Endothelial cell of umbilical vein (primary cell): ENCODE measurements at regions of chr15 and their contacts with region 1.

Region 1: DNA sequence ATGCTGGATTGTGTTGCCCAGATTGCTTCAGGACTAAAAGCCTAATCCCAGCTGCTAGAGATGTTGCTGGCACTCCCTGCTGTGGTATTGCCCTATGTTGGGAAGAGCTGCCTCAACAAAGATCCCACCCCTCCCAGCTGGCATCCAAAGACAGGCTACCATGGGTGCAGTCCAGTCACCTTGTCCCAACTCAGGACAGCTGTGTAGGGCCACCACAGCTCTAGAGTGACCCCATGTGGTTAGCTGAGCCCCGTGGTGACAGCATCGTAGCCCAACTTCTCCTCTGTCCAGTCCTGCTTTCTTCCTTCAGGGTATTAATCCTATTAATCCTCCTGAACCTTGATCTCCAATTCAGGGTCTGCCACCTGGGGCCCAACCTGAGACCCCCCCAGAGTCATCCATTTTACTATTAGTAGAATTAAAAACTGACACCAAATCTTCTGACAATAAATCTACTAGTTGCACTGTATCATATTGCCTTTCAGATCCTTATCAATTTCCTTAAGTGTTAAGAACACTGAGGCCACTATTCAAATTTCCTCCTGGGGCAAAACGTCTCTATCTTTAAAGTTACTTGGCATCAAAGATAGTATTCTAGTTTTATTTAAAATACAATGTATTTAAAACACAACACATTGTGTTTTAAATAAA is 83.5 kb downstream of the AQP9 start:
- DNase-seq: peak; percentile 48
- H3K4me3 ChIP-seq: no peak overlapping the region
- H3K27ac ChIP-seq: no peak overlapping the region
- H3K4me1 ChIP-seq: no peaks in the 10 kb centered on the region
- H3K27me3 ChIP-seq: no peaks in the 10 kb centered on the region
- CTCF ChIP-seq: peak; percentile 67 to 72
- POLR2A ChIP-seq: no peak

Region 2: DNA sequence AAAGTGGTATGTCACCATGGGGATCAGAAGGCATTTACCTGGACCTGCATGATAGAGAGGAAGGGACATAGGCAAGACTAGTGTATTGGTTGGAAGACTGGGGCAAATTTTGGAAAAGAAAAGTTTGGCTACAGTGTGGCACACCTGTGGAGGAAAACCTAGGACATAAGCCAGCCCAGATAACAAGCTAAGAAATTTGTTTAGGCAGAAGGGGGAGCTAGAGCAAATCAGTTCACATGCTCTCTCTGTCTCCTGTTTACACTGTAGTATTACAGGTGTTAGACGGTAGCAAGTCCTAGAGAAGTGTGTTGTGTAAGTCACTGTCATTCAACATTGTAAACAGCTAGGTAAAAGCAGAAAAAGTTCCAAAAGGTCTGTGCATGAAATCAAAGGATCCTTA is 144.3 kb before region 1 on chr15:
- CTCF ChIA-PET with region 1: interaction called, 23 read pairs
- POLR2A ChIA-PET with region 1: no interaction called
- dilution Hi-C with region 1: no loop called
- intact Hi-C with region 1: loop called (anchors 1 kb)
- DNase-seq: peak; percentile 35
- H3K4me3 ChIP-seq: no peak overlapping the region
- H3K27ac ChIP-seq: no peak overlapping the region
- H3K4me1 ChIP-seq: no peaks in the 10 kb centered on the region
- H3K27me3 ChIP-seq: no peaks in the 10 kb centered on the region
- CTCF ChIP-seq: peak in 1 of 2 donors; percentile 33
- POLR2A ChIP-seq: no peak

Region 3: GRCh38 chr15:58190419-58190818 is 31.3 kb before region 1 on chr15:
- CTCF ChIA-PET with region 1: interaction called, 11 read pairs
- POLR2A ChIA-PET with region 1: no interaction called
- dilution Hi-C with region 1: no loop called
- intact Hi-C with region 1: loop called (anchors 1 kb)
- DNase-seq: no peak
- H3K4me3 ChIP-seq: no peak overlapping the region
- H3K27ac ChIP-seq: no peak overlapping the region
- H3K4me1 ChIP-seq: no peaks in the 10 kb centered on the region
- H3K27me3 ChIP-seq: peaks cover 0 to 2% of the 10 kb centered on the region in 2 experiments
- CTCF ChIP-seq: no peak
- POLR2A ChIP-seq: no peak

Region 4: DNA sequence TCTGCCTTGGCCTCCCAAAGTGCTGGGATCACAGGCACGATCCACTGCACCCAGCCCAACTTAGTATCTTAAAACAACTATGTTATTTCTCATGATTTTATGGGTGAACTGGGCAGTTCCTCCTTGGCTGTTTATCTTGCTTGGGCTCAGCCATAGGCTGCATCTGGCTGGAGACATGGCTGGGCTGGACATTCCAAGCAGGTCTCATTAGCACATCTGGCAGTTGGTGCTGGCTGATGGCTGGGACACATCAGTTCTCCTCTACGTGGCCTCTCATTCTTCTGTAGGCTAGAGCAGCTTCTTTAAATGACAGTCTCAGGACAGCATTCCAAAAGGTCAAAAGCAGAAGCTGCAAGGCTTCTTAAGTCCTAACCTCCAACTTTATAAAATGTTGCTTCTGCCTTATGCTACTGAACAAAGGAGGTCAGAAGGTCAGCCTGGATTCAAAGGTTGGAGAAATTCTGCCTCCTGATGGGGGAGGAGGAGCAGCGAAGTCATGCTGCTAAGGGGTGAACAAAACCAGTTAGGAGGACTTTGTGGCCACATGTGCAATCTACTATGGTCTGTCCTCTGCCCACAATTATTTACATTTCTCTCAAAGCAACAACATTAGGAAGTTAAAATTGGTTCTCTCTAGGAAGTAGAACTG is 60.5 kb after region 1 on chr15:
- CTCF ChIA-PET with region 1: no interaction called
- POLR2A ChIA-PET with region 1: no interaction called
- dilution Hi-C with region 1: no loop called
- intact Hi-C with region 1: no loop called
- DNase-seq: no peak
- H3K4me3 ChIP-seq: no peak overlapping the region
- H3K27ac ChIP-seq: no peak overlapping the region
- H3K4me1 ChIP-seq: no peaks in the 10 kb centered on the region
- H3K27me3 ChIP-seq: peaks cover 6 to 8% of the 10 kb centered on the region in 2 experiments
- CTCF ChIP-seq: no peak
- POLR2A ChIP-seq: no peak